WTC11 (cell line): ENCODE measurements at regions of chr3 and their contacts with region 1.

Region 1: DNA sequence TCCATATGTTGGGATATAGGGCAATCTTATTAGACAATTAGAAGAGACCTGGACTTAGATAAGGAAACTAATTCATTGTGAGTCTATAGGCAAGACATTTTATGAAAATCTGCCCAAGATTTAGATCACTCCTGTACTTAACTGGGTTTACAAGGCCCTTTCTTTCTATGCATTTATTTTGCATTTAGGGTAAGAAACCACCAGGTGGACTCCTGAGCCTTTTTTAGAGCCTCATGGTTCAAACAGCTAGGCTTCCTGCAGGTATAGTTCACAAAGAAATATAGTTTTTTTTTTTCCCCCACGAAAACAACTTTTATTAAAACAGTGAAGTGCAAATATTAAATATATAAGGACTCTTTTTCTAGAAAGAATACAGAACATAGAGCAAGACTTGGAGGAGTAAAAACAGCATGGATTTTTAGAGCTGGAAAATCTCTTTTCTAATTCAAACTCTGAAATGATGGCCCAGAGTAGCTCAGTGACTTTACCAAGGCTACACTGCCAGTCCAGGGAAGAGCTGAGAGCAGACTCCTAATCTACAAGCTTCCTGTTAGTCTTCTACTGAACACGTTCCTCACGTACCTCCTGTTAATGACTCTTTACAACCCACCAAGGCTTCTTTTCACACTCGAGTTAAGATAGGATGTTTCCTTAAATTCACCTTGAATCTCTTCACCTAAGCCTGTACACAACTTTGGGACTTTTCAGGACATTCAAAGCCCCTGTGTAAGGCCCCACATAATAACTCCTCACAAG is 400.9 kb upstream of the ATP11B start:
- DNase-seq: no peak
- ATAC-seq: peak; percentile 74
- H3K4me3 Mint-ChIP-seq: no peak overlapping the region
- H3K27ac Mint-ChIP-seq: peak overlapping the region; percentile 13; the same call in 1 of the 2 replicates
- H3K4me1 Mint-ChIP-seq: peaks cover 27% of the 10 kb centered on the region
- H3K27me3 Mint-ChIP-seq: peaks cover under 1% of the 10 kb centered on the region
- CTCF ChIP-seq: no peak

Region 2: GRCh38 chr3:182412065-182412464 is 19.7 kb after region 1 on chr3:
- CTCF ChIA-PET with region 1: no interaction called
- POLR2A ChIA-PET with region 1: no interaction called
- DNase-seq: no peak
- ATAC-seq: no peak
- H3K4me3 Mint-ChIP-seq: no peak overlapping the region
- H3K27ac Mint-ChIP-seq: no peak overlapping the region
- H3K4me1 Mint-ChIP-seq: peaks cover 15% of the 10 kb centered on the region
- H3K27me3 Mint-ChIP-seq: no peaks in the 10 kb centered on the region
- CTCF ChIP-seq: no peak

Region 3: GRCh38 chr3:182490596-182491491 is 98.5 kb after region 1 on chr3:
- CTCF ChIA-PET with region 1: interaction called, 10 read pairs
- POLR2A ChIA-PET with region 1: no interaction called
- DNase-seq: no peak
- ATAC-seq: peak; percentile 75
- H3K4me3 Mint-ChIP-seq: no peak overlapping the region
- H3K27ac Mint-ChIP-seq: no peak overlapping the region
- H3K4me1 Mint-ChIP-seq: peaks cover 22% of the 10 kb centered on the region
- H3K27me3 Mint-ChIP-seq: no peaks in the 10 kb centered on the region
- CTCF ChIP-seq: peak; percentile 16; the same call in 1 of the 2 replicates